Activated naive CD4-positive, alpha-beta T cell treated with anti-CD3 and anti-CD28 coated beads for 36 hours (primary cell): ENCODE measurements at regions of chr11 and their contacts with region 1.

Region 1: GRCh38 chr11:60775420-60775961 is 9.6 kb upstream of the MS4A10 start:
- DNase-seq: peak; percentile 93
- H3K4me3 Mint-ChIP-seq: no peak overlapping the region
- H3K27ac Mint-ChIP-seq: no peak overlapping the region
- H3K4me1 Mint-ChIP-seq: peaks cover 7% of the 10 kb centered on the region
- H3K27me3 Mint-ChIP-seq: no peaks in the 10 kb centered on the region

Region 2: GRCh38 chr11:60762851-60763691 is 12.4 kb before region 1 on chr11:
- CTCF ChIA-PET with region 1: interaction called, 33 read pairs
- intact Hi-C with region 1: no loop called
- DNase-seq: no peak
- H3K4me3 Mint-ChIP-seq: no peak overlapping the region
- H3K27ac Mint-ChIP-seq: no peak overlapping the region
- H3K4me1 Mint-ChIP-seq: peaks cover 3% of the 10 kb centered on the region
- H3K27me3 Mint-ChIP-seq: peaks cover 15% of the 10 kb centered on the region

Region 3: DNA sequence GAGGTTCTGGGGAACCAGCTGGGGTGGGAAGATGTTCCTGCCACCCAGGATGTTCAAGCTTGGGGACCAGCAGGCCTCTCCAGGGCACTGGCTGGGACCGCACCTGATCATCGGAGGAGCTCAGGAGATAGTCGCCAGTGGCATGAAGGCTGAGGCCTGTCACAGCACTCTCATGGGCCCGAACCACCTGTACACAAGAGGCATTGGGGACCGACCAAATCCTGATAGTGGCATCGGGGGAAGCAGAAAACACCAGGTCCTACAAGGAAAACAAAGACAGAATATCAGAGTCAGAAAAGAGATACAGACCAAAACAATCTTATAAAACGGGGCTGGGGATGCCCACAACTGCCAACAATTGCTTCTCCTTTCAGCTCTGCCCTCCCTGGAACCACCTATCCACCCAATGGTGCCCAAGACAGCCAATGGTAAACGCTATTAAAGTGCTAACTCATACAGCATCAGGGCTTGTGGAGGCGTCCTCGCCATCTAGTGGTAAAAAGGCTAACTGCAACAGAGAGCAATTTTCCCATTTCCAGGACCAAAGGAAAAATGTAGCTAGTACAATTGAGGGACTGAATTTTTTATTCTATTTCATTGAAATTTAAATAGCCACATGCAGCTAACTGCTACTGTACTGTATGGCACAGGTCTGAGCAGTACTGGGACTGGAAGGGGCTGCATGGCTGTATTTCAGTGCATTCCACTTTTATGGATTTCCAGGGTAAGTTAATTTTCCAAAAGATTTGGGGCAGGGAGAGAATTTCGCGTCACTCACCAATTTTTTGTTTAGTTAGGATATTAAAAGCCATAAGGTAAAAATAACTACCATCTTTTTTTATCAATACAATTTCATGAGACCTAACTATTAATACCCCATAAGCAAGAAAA is 123.8 kb after region 1 on chr11:
- CTCF ChIA-PET with region 1: interaction called, 7 read pairs
- intact Hi-C with region 1: loop called (anchors 1 kb)
- DNase-seq: peak; percentile 32
- H3K4me3 Mint-ChIP-seq: no peak overlapping the region
- H3K27ac Mint-ChIP-seq: peak overlapping the region; percentile 38
- H3K4me1 Mint-ChIP-seq: peaks cover 12% of the 10 kb centered on the region
- H3K27me3 Mint-ChIP-seq: no peaks in the 10 kb centered on the region

Region 4: GRCh38 chr11:61294717-61295595 is 519.5 kb after region 1 on chr11 and contains the start of gene VWCE:
- CTCF ChIA-PET with region 1: no interaction called
- intact Hi-C with region 1: loop called (anchors 1 kb)
- DNase-seq: peak; percentile 83
- H3K4me3 Mint-ChIP-seq: peak within 1 kb of the TSS; percentile 84
- H3K27ac Mint-ChIP-seq: peak within 1 kb of the TSS; percentile 41
- H3K4me1 Mint-ChIP-seq: peaks cover 34% of the 10 kb centered on the region
- H3K27me3 Mint-ChIP-seq: peaks cover 9% of the 10 kb centered on the region
- total RNA-seq, gene VWCE: 6.6 TPM

Region 5: GRCh38 chr11:61384271-61385242 is 609.1 kb after region 1 on chr11:
- CTCF ChIA-PET with region 1: no interaction called
- intact Hi-C with region 1: loop called (anchors 1 kb)
- DNase-seq: no peak
- H3K4me3 Mint-ChIP-seq: no peak overlapping the region
- H3K27ac Mint-ChIP-seq: no peak overlapping the region
- H3K4me1 Mint-ChIP-seq: peaks cover 3% of the 10 kb centered on the region
- H3K27me3 Mint-ChIP-seq: no peaks in the 10 kb centered on the region

Region 6: DNA sequence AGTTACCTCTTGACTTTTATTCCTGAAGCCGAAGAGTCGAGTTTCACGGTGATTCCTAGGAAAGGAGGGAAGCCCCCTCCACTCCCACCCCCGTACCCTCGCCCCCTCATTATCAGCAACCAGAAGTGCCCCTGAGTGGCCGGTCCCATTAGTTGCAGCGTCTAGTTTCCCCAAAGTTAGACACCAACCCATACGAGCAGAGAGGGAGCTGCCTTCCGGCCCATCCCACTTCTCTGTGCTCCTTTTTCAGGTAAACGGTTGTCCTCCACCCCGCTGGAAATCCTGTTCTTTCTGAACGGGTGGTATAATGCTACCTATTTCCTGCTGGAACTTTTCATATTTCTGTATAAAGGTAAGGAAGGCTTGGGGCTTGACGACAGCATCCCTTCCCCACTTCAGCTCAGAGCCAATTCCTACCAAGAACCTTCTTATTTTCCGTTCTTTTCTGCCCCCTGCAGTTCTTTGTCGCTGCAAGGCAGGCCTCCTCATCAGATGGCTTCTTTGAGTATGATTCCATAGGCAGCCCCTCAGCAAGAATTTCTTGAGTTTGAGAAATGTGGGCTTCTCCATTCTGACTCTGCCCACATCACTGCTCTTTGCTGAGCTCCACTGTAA is 617.6 kb after region 1 on chr11:
- CTCF ChIA-PET with region 1: no interaction called
- intact Hi-C with region 1: loop called (anchors 2 kb)
- DNase-seq: peak; percentile 37
- H3K4me3 Mint-ChIP-seq: peak overlapping the region; percentile 89
- H3K27ac Mint-ChIP-seq: peak overlapping the region; percentile 81
- H3K4me1 Mint-ChIP-seq: peaks cover 17% of the 10 kb centered on the region
- H3K27me3 Mint-ChIP-seq: no peaks in the 10 kb centered on the region